Cardiac septum (tissue), 1 donor: ENCODE measurements at regions of chr1 and their contacts with region 1.

Region 1: GRCh38 chr1:110209715-110210603 is at the start of gene KCNC4:
- DNase-seq: peak; percentile 94
- total RNA-seq, gene KCNC4: 16.6 TPM

Region 2: DNA sequence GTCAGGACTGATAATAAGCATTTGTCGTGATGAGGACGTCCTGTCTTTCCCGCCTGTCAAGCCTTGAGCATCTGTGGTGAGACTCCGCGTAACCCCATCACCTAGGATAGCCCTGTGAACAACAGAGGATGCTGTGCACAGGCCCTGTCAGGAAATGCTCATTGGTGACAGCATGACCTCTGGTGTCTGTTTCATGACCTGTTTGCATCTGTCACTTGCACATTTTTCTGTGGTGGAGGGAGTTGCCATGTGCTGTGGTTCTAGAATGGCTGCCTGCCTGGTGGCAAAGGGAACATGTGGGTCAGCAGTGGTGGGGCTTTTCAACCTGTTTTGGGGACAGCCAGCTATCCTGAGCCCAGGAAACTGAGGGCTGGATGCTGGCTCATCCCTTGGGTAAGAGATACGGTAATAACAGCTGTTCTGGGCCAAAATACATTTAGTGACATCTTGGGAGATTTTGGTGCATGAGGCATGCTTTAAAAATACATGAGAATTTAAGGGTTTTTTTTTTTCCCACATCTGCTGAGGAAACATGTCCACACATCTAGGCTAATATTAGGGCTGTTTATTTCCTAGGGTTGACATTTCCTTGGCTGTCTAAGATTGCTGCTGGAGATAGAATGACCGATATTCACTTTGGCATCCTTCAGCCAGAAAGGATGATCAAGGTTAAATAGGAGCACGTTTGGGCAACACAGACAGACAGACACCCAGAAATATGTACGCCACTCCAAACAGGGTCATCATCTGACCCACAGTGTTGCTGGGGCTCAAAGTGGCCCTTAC is 53.1 kb after region 1 on chr1:
- intact Hi-C with region 1: loop called (anchors 5 kb)
- DNase-seq: no peak

Region 3: DNA sequence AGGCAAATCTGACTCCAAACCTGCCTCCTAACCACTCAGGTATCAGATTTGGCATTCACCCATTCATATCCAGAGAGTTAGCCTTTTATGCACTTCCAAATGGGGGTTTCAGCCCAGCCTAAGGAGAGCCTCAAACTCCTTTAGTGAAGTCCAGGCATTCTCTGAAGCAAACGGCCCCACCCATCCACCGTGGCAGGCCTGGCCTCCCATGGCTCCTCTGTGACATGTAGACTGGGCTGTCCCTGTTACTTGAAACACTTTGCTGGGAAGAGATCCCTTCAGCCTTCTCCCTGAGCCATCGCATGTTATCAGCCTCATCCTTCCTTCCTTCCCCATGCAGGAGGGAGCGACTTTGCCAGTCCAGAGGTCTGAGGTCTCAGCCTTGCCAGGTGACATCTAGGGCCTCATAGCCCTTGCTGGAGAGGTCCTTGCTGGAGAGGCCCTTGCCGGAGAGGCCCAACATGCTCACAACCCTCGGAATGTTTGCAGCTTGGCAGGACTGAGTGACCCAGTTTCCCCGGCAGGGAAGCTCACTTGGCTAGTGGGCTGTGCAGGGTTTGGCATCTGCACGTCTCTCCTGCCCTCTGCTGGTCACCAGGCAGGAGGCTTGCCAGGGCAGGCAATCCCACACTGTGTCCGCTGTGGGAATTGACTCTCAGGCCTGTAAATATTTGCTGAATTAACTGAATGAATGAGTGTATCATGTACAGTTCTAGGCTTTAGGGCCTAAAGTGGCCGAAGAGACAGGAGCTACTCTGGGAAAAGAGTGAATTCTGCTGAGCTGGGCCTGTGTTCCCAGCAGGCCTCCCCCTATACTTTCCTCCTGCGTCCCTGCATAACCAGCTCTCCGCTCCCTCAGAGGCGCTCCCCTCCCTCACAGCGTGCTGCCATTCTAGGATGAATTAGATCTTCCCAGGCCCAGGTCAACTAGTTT is 102.5 kb after region 1 on chr1:
- intact Hi-C with region 1: loop called (anchors 1 kb)
- DNase-seq: peak; percentile 91

Region 4: DNA sequence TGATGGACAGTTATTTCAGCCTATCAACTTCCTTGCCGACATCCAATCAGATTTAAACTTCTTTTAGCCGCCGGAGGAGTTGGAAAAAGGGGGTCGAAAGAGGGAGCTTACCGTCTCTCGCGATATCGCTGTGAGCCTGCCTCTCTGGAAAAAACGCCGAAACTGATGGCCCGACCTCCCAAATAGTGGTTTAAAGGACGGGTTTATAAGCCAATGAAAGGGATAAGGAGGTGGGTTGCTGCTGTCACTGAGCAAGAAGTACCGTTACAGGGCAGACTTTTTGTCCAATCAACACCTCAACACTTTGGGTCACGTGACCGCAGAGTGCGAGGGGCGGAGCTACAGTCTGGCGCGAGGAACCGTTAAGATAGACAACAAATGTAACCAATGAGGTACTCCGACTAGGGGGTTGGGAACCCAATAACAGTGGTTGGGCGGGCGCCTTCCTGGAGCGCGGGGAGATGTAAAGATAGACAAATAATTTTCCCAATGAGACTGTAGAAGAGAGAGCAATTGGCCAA is 129.0 kb after region 1 on chr1 and contains the start of gene RBM15:
- intact Hi-C with region 1: loop called (anchors 1 kb)
- DNase-seq: peak; percentile 98
- total RNA-seq, gene RBM15: 22.7 TPM

Region 5: DNA sequence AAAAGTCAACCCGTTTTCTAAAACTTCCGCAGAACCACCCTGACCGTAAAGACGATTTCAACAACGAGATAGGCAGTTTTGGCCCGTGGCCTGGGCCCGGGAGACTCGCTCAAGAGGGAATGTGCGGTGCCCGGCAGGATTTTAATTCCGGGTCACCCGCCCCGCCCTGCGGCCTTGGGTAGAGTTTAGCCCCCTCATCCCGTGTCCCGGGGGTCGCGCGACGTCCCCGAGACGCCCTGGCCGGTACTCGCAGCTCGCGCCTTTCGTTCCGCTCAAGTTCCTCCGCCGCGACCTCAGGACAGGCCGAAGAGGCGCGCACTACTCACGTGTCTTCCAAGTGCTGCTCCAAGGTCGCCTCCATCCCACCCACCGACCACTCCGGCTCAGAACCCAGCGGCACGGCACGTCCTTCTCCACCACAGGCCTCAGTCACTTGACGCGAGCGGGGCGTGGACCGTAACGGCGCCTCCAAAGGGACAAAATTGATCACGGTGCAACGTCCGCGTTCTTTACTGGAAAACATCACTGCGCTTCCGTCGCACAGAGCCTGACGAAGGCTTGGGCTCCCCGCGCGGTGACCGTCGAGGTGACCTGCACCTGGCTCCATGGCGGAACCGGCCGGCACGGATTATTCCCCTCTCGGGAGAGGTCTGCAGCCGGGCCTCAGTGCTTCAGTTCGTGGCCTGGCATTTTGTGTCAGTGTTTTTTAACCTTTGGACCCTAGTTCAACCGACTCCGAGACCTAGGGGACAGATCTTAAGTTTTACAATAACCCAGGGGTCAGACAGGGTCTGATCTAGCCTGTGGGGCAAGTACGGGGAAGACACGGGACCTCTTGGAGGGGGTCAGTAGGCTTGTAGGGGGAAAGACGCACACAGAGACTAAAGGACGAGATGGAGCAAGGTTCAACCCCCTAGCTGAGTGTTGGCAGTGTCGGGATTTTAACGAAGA is 197.6 kb after region 1 on chr1 and contains the start of gene LAMTOR5:
- intact Hi-C with region 1: loop called (anchors 5 kb)
- DNase-seq: peak; percentile 97
- total RNA-seq, gene LAMTOR5: 195 TPM

Region 6: DNA sequence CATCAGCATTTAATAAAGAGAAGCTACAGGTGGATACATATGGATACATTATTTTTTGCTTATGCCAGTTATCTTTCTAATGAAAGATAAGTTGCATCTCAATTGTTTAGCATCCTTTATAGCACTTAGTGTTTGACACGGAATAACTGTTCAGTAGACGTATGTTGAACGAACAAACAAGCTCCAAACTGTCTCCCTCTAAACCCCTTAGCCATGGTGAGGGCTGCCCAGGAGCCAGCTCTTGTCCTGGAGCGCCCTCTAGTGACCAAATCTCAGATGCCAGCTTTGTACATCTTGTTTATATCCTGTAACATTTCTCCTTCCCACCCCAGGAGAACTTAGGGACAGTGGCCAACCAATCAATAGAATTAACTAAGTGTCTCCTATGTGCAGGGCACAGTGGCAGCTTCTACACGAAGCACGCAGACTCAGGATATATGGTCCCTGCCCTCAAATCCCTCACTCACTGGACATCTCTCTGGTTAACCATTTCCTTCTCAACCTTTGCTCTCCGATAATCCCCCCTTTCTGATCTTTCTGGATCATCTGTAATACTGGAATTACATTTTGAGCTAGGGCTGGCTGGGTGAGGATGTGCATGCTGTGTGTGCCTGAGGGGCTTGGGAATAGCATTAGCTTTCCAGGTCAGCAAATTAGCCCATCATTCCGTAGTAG is 286.1 kb after region 1 on chr1:
- intact Hi-C with region 1: loop called (anchors 5 kb)
- DNase-seq: no peak

Region 7: GRCh38 chr1:110619412-110620249 is 409.7 kb after region 1 on chr1:
- intact Hi-C with region 1: loop called (anchors 10 kb)
- DNase-seq: peak; percentile 88